Activated T-helper 2 cell treated with anti-CD3 and anti-CD28 coated beads, Interferon-gamma antibody, Interleukin-2, Interleukin-4, amounts not matched to agents 10 μg/mL and 5 μg/mL and 100 μg/mL, durations not matched to agents 14 hours and 24 hours and 36 hours (primary cell): ENCODE measurements at regions of chr5 and their contacts with region 1.

Region 1: GRCh38 chr5:36151434-36152323 is at the starts of genes LMBRD2 and SKP2:
- DNase-seq: peak; percentile 97
- H3K4me3 Mint-ChIP-seq: peak within 1 kb of the TSS; percentile 95
- H3K27ac Mint-ChIP-seq: peak within 1 kb of the TSS; percentile 88
- H3K4me1 Mint-ChIP-seq: peaks cover 44% of the 10 kb centered on the region
- H3K27me3 Mint-ChIP-seq: no peaks in the 10 kb centered on the region
- total RNA-seq, gene LMBRD2: 9.3 and 11.6 TPM in 2 replicates
- total RNA-seq, gene SKP2: 56.6 and 58.9 TPM in 2 replicates

Region 2: DNA sequence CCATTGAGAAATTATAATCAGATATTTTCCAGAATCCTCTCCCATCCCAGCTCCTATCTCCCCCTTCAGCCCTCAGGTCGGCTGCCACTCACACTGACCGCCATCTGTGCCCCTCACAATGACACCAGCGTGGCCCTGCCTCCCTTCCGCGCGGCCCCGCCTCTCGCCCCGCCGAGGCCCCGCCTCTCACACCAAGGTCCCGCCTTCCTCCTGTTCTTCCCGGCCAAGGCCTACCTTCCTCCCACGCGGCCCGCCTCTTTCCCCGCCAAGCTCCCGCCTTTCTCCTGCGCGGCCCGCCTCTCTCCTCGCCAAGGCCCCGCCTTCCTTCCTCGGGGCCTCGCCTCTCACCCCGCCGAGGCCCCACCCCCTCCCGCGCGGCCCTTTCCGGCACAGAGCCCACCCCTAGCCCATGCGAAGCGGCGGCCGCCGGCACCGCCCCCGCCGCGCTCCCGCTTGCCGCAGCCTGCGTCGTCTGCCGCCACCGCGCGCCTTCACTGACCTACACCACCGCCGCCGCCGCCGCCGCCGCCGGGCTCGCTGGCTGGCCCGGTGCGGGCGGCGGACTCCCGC is 1222.4 kb before region 1 on chr5 and contains the start of gene DNAJC21:
- intact Hi-C with region 1: loop called (anchors 1 kb)
- DNase-seq: peak; percentile 97
- H3K4me3 Mint-ChIP-seq: peak within 1 kb of the TSS; percentile 96
- H3K27ac Mint-ChIP-seq: peak within 1 kb of the TSS; percentile 92
- H3K4me1 Mint-ChIP-seq: peaks cover 37% of the 10 kb centered on the region
- H3K27me3 Mint-ChIP-seq: no peaks in the 10 kb centered on the region
- total RNA-seq, gene DNAJC21: 62.7 and 65.2 TPM in 2 replicates

Region 3: DNA sequence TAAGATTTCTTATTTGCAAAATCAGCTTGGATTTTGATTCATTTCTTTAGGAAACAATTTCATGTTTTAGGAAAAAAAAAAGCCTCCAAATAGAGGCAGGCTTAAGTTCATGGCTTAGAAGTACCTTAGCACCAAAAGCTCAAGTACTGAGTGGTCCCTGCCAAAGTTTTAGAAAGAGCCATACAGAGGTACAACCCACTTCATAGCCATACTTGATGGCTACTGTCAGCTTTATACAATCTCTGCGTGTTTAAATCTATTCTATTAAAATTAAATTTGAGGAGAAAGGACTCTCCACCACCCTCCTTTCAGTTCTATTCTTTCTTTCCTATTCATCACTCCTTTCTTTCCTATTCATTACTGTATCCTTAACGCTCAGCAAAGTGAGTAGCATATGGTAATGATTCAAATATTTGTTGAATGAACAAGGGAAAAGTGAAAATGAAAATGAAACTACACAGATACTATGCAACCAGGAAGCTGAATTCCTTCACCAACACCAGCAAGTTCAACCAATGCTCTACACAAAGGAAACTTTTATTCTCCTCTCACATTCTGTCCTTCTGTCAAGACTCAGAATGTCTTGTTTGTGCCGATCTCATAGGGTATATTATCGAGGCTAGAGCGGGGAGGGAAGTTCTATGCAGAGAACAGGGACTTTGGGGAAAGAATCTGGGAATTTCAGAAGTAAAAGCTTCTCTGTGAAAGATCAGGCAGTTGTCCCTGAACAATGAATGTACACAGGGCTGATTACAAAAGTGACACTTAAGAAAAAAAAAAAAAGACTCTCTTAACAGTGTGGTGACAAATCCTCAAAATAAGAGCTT is 672.6 kb before region 1 on chr5:
- intact Hi-C with region 1: no loop called
- DNase-seq: no peak
- H3K4me3 Mint-ChIP-seq: peak overlapping the region; percentile 64
- H3K27ac Mint-ChIP-seq: peak overlapping the region; percentile 93
- H3K4me1 Mint-ChIP-seq: peaks cover 11% of the 10 kb centered on the region
- H3K27me3 Mint-ChIP-seq: no peaks in the 10 kb centered on the region

Region 4: GRCh38 chr5:35902046-35902676 is 249.5 kb before region 1 on chr5:
- intact Hi-C with region 1: no loop called
- DNase-seq: peak; percentile 49
- H3K4me3 Mint-ChIP-seq: peak overlapping the region; percentile 28
- H3K27ac Mint-ChIP-seq: peak overlapping the region; percentile 83
- H3K4me1 Mint-ChIP-seq: peaks cover 78% of the 10 kb centered on the region
- H3K27me3 Mint-ChIP-seq: no peaks in the 10 kb centered on the region